ENCODE measurements at regions of chr11 and their contacts with region 1.

Region 1: DNA sequence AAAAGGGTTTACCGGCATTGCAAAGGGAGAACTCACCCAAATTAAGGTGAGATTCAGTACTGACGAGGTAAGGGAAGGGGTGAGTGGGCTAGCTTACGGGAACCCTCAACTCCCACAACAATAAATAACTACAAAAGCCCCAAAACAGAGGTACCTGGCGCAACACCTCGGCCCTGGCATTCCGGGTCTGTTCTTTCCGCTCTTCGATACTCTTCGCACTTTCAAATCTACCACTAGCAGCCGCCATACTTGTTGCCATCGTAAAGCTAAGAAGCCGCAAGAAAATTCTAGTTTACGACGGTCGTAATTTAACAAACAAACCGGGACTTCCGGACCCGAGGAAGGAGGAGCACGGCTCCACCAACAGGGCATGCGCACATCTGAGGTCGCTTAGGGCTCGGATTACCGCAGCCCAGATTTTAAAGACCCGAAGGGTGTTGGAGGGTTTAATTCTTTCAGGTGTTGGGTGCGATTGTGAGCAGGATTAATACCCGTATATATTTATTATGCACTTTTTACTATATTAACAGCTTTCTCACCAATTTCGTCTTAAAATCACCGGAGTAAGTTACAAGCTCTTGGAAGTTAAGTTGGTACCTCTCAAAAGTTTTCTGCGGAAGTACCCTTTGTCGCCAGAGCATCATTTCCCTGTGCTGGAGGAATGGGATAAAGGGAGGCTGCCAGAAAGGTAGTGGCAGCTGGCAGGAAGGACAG is at the start of gene CWF19L2:
- DNase-seq: peak; percentile 96
- ATAC-seq: peak; percentile 99
- H3K4me3 ChIP-seq: peak within 1 kb of the TSS; percentile 85 to 94 (median 88)
- H3K27ac ChIP-seq: peak within 1 kb of the TSS; percentile 77
- H3K4me1 ChIP-seq: peaks cover 17% of the 10 kb centered on the region
- H3K27me3 ChIP-seq: no peaks in the 10 kb centered on the region; a peak in 1 of 5 replicates
- CTCF ChIP-seq: 0 out of 2 replicates have a peak, but pooled peaks have one; percentile 25
- EP300 ChIP-seq: peak in 1 of 2 experiments; percentile 50; a peak in 1 of 4 replicates
- POLR2A ChIP-seq: peak; percentile 72 to 74
- RAD21 ChIP-seq: peak; percentile 17; the same call in 1 of the 2 replicates
- total RNA-seq, gene CWF19L2: 18.6 and 24.5 TPM in 2 replicates

Region 2: DNA sequence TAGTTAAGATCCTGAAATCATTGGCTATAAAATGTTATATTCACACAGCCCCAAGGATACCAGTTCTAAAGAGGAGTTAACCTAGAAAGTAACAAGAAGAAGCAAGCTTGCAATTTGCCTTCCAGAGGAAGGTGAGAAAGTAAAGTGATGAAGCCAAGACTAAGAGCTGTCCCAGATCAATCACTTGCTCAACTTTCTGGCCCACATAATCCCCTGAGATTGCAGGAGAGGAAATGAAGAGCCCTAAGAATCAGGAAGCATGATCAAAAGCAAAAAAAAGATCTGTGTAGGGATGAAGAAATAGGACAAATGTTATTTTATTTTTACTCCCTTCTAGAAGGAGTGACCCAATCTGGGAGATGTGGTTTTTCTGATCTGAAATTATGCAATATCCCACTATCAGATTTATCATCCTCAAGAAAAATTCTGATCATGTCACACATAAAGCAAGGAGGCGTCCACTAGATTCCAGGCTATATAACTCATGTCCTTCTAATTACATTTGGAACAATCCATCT is 259.2 kb before region 1 on chr11:
- CTCF ChIA-PET with region 1: no interaction called
- POLR2A ChIA-PET with region 1: interaction called, 6 read pairs
- in situ Hi-C with region 1: no loop called
- intact Hi-C with region 1: loop called (anchors 10 kb)
- DNase-seq: no peak
- ATAC-seq: no peak
- H3K4me3 ChIP-seq: no peak overlapping the region
- H3K27ac ChIP-seq: no peak overlapping the region
- H3K4me1 ChIP-seq: peaks cover 49% of the 10 kb centered on the region
- H3K27me3 ChIP-seq: no peaks in the 10 kb centered on the region
- CTCF ChIP-seq: no peak
- EP300 ChIP-seq: no peak
- POLR2A ChIP-seq: no peak
- RAD21 ChIP-seq: no peak

Region 3: DNA sequence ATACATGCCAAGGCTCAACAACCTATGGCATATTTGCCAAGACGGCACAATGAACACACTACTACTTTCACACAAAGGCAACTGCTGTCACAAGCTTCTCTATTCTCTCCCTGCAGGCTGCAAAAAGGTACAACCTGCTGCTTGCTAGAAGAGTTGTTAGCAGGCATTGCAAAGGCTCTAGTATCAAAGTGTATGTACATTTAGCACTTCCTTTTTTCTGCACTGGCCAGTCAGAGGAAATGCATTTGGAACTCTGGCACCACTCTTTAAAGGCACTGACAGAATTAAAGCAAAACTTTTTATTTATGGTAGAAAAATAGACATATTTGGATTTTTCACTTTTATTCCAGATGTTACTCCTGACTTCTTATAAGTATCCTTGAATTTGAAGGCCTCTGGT is 126.0 kb before region 1 on chr11:
- CTCF ChIA-PET with region 1: no interaction called
- POLR2A ChIA-PET with region 1: no interaction called
- in situ Hi-C with region 1: no loop called
- intact Hi-C with region 1: loop called (anchors 2 kb)
- DNase-seq: no peak
- ATAC-seq: no peak
- H3K4me3 ChIP-seq: no peak overlapping the region
- H3K27ac ChIP-seq: no peak overlapping the region
- H3K4me1 ChIP-seq: peaks cover 5% of the 10 kb centered on the region
- H3K27me3 ChIP-seq: no peaks in the 10 kb centered on the region
- CTCF ChIP-seq: no peak
- EP300 ChIP-seq: no peak
- POLR2A ChIP-seq: no peak
- RAD21 ChIP-seq: no peak

Region 4: GRCh38 chr11:107468596-107468995 is 10.9 kb after region 1 on chr11:
- CTCF ChIA-PET with region 1: no interaction called
- POLR2A ChIA-PET with region 1: interaction called, 10 read pairs
- in situ Hi-C with region 1: no loop called
- intact Hi-C with region 1: no loop called
- DNase-seq: no peak
- ATAC-seq: no peak
- H3K4me3 ChIP-seq: no peak overlapping the region
- H3K27ac ChIP-seq: no peak overlapping the region
- H3K4me1 ChIP-seq: no peaks in the 10 kb centered on the region
- H3K27me3 ChIP-seq: no peaks in the 10 kb centered on the region; a peak in 1 of 5 replicates
- CTCF ChIP-seq: no peak
- EP300 ChIP-seq: no peak
- POLR2A ChIP-seq: no peak
- RAD21 ChIP-seq: no peak

Region 5: GRCh38 chr11:107722662-107723061 is 264.9 kb after region 1 on chr11:
- CTCF ChIA-PET with region 1: no interaction called
- POLR2A ChIA-PET with region 1: no interaction called
- in situ Hi-C with region 1: no loop called
- intact Hi-C with region 1: no loop called
- DNase-seq: no peak
- ATAC-seq: no peak
- H3K4me3 ChIP-seq: no peak overlapping the region
- H3K27ac ChIP-seq: no peak overlapping the region
- H3K4me1 ChIP-seq: no peaks in the 10 kb centered on the region
- H3K27me3 ChIP-seq: no peaks in the 10 kb centered on the region
- CTCF ChIP-seq: no peak
- EP300 ChIP-seq: no peak
- POLR2A ChIP-seq: no peak
- RAD21 ChIP-seq: no peak